ENCODE measurements at regions of chr9 and their contacts with region 1.

Region 1: GRCh38 chr9:36166101-36166927 is 2.9 kb upstream of the CCIN start:
- DNase-seq: peak; percentile 88
- H3K4me3 ChIP-seq: peak overlapping the region; percentile 2 to 57 (median 41)
- H3K27ac ChIP-seq: peak overlapping the region; percentile 79 to 84 (median 81)
- H3K4me1 ChIP-seq: peaks cover 9 to 30% (median 22%) of the 10 kb centered on the region in 4 donors
- H3K27me3 ChIP-seq: no peaks in the 10 kb centered on the region
- CTCF ChIP-seq: peak; percentile 93 to 95 (median 94)
- EP300 ChIP-seq: no peak
- POLR2A ChIP-seq: no peak

Region 2: DNA sequence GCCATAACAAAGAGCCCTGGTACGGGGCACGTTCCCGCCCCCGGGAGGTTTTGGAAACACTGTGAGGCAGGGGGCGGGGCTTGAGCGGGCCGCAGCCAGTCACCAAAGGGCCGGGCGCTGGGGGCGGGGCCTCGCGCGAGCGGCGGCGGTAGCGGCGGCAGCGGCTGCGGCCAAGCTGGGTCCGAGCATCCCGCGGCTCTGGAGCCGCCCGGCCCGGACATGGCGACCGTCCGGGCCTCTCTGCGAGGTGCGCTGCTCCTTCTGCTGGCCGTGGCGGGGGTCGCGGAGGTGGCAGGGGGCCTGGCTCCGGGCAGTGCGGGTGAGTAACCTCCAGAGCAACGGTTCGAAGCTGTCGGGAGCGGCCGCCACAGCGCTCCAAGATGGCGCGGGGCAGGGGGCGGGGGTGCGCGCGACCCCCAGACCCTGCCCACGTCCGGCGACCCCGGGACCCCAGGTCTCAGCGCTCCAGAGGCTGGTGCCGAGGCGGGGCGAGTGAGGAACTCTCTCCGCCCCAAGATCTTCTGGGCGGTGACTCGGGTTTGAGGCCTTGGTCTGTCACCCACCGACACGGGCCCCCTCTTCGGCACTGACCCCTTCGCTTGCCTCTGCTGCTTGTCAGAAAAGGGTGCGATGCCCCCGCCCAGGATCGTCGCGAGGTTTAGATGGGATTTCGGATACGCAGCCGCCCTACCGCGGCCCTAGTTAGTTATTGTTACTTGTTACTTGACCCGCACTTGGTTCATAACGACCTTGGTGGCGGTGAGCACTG is 129.3 kb before region 1 on chr9 and contains the start of gene RECK:
- in situ Hi-C with region 1: loop called in 1 of 4 experiments (anchors 25 kb)
- intact Hi-C with region 1: no loop called
- DNase-seq: peak; percentile 88
- H3K4me3 ChIP-seq: peak within 1 kb of the TSS; percentile 55 to 91 (median 86)
- H3K27ac ChIP-seq: peak within 1 kb of the TSS; percentile 80 to 86 (median 82)
- H3K4me1 ChIP-seq: peaks cover 4 to 29% (median 8%) of the 10 kb centered on the region in 4 donors
- H3K27me3 ChIP-seq: no peaks in the 10 kb centered on the region
- CTCF ChIP-seq: no peak
- EP300 ChIP-seq: no peak
- POLR2A ChIP-seq: peak; percentile 31
- total RNA-seq, gene RECK: 1.5 to 30.3 (median 6.0) TPM

Region 3: GRCh38 chr9:36102742-36103495 is 63.4 kb before region 1 on chr9:
- in situ Hi-C with region 1: loop called in 3 of 4 experiments (anchors 5 to 10 kb)
- intact Hi-C with region 1: loop called (anchors 2 kb)
- DNase-seq: peak; percentile 90
- H3K4me3 ChIP-seq: no peak overlapping the region
- H3K27ac ChIP-seq: peak overlapping the region in 2 of 4 donors; percentile 10 to 19
- H3K4me1 ChIP-seq: peaks cover 0 to 11% (median 6%) of the 10 kb centered on the region in 4 donors
- H3K27me3 ChIP-seq: no peaks in the 10 kb centered on the region
- CTCF ChIP-seq: peak; percentile 80 to 91 (median 84)
- EP300 ChIP-seq: no peak
- POLR2A ChIP-seq: no peak

Region 4: GRCh38 chr9:36717276-36717675 is 551.0 kb after region 1 on chr9:
- in situ Hi-C with region 1: no loop called
- intact Hi-C with region 1: no loop called
- DNase-seq: no peak
- H3K4me3 ChIP-seq: no peak overlapping the region
- H3K27ac ChIP-seq: no peak overlapping the region
- H3K4me1 ChIP-seq: no peaks in the 10 kb centered on the region
- H3K27me3 ChIP-seq: no peaks in the 10 kb centered on the region
- CTCF ChIP-seq: no peak
- EP300 ChIP-seq: no peak
- POLR2A ChIP-seq: no peak